ENCODE measurements at regions of chr10 and their contacts with region 1.

Region 1: GRCh38 chr10:112741830-112742411 is 208.1 kb upstream of the TCF7L2 start:
- DNase-seq: peak; percentile 31
- H3K4me3 Mint-ChIP-seq: peak overlapping the region; percentile 12
- H3K27ac Mint-ChIP-seq: no peak overlapping the region
- H3K4me1 Mint-ChIP-seq: peaks cover 32% of the 10 kb centered on the region
- H3K27me3 Mint-ChIP-seq: no peaks in the 10 kb centered on the region
- CTCF ChIP-seq: no peak

Region 2: DNA sequence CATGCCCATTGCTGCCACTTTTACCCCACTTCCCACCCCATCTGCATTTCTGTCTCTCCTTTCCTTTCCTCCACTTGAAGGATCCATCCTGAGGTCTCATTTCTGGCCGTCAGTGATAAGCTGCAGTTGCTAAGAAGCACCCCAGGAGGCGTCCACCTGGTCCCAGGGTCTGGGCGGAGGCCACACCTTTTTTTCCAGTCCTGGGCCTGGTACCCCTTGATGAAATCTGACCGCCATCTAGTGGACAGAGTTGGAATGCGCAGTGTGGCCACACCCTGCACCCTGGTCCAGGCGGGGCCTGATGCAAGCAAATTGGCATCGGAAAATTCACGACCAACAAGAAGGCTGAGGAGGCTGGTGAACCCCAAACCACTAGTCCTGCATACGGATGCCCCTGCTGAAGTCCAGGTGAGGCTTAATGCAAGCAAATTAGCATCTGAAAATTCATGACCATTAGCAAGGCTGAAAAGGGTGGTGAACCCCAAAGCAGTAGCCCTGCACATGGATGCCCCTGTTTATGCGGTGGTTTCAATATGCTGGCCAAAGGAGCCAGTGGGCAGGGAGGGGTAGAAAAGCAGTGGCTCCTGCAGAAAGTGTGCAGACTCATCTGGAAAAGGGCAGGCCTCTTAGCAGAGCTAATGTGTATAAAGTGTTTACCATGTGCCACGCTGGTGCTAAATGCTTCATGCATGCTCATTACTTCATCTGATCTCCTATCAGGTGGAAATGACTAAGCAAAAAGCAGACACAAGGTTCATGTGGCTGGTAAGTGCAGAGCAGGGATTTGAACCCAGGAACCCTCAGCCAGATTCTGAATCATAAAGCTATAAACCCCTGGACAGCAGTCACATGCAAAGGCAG is 601.6 kb before region 1 on chr10:
- CTCF ChIA-PET with region 1: no interaction called
- intact Hi-C with region 1: no loop called
- DNase-seq: peak; percentile 85
- H3K4me3 Mint-ChIP-seq: no peak overlapping the region
- H3K27ac Mint-ChIP-seq: no peak overlapping the region
- H3K4me1 Mint-ChIP-seq: no peaks in the 10 kb centered on the region
- H3K27me3 Mint-ChIP-seq: peaks cover 21% of the 10 kb centered on the region
- CTCF ChIP-seq: peak; percentile 83

Region 3: DNA sequence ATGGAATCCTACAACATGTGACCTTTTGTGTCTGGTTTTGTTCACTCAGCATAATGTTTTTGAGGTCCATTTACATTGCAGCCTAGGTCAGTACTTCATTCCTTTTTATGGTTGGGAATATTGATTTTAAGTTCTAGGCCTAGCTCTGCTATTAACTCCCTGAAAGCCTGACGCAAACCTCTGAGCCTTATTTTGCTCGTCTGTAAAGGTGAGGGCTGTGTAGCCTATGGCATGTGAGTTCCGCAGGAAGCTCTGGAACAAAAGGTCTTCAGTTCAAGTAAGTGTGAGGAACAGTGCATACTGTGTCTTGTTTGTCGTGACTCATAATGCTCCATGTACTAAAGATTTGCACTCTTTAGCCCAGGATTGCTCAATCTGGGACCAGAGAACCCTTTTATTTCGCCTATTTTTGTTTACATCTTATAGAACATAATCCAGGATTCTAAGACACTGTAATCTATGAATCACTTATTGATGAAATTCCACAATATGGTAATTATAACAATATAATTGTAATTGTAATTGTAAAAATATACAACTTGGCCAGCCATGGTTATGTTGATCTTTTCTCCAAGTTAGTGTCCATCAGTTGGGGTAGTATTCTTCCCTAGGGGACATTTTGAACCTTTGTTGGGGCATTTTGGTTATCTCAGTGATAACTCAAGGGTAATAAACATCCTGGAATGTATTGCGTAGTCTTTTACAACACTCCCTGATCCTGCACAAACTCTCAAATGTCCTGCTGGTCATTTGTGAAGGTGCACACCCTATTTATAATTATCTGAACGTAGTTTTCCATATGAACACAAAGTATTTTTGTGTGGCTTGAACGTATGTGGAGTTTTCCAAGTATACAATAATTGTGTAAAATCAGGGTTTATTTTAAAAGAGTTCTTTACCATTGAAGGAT is 110.2 kb before region 1 on chr10:
- CTCF ChIA-PET with region 1: no interaction called
- intact Hi-C with region 1: loop called (anchors 2 kb)
- DNase-seq: peak; percentile 54
- H3K4me3 Mint-ChIP-seq: no peak overlapping the region
- H3K27ac Mint-ChIP-seq: peak overlapping the region; percentile 94
- H3K4me1 Mint-ChIP-seq: peaks cover 50% of the 10 kb centered on the region
- H3K27me3 Mint-ChIP-seq: no peaks in the 10 kb centered on the region
- CTCF ChIP-seq: no peak

Region 4: GRCh38 chr10:112775381-112775780 is 33.5 kb after region 1 on chr10:
- CTCF ChIA-PET with region 1: no interaction called
- intact Hi-C with region 1: loop called (anchors 2 kb)
- DNase-seq: no peak
- H3K4me3 Mint-ChIP-seq: no peak overlapping the region
- H3K27ac Mint-ChIP-seq: no peak overlapping the region
- H3K4me1 Mint-ChIP-seq: peaks cover 35% of the 10 kb centered on the region
- H3K27me3 Mint-ChIP-seq: no peaks in the 10 kb centered on the region
- CTCF ChIP-seq: no peak

Region 5: DNA sequence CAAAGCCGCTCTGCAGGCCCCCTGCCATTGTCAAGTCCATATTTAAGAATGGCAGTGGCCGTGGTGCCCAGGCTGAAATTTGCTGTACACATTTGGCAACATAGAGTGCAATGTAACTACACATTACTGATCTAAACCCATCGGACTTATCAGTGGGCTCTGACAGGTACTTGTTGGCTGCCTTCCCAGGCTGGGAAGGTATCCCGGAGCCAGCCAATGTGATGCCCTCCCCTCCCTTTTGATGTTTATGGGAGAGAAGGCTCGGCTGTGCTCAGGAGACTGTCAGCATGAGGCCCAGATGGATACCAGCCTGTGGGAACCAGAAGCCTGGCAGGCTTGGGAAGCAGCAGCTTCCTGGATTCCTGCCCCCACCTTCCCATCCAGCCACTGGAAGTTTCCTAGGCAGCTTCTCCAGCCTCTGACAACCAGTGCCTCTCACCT is 62.1 kb after region 1 on chr10:
- CTCF ChIA-PET with region 1: no interaction called
- intact Hi-C with region 1: loop called (anchors 2 kb)
- DNase-seq: peak; percentile 30
- H3K4me3 Mint-ChIP-seq: peak overlapping the region; percentile 37
- H3K27ac Mint-ChIP-seq: peak overlapping the region; percentile 85
- H3K4me1 Mint-ChIP-seq: peaks cover 51% of the 10 kb centered on the region
- H3K27me3 Mint-ChIP-seq: no peaks in the 10 kb centered on the region
- CTCF ChIP-seq: no peak

Region 6: GRCh38 chr10:112886463-112886862 is 144.5 kb after region 1 on chr10:
- CTCF ChIA-PET with region 1: no interaction called
- intact Hi-C with region 1: no loop called
- DNase-seq: no peak
- H3K4me3 Mint-ChIP-seq: no peak overlapping the region
- H3K27ac Mint-ChIP-seq: no peak overlapping the region
- H3K4me1 Mint-ChIP-seq: no peaks in the 10 kb centered on the region
- H3K27me3 Mint-ChIP-seq: no peaks in the 10 kb centered on the region
- CTCF ChIP-seq: no peak

Region 7: GRCh38 chr10:113060201-113061053 is 318.5 kb after region 1 on chr10:
- CTCF ChIA-PET with region 1: no interaction called
- intact Hi-C with region 1: loop called (anchors 10 kb)
- DNase-seq: no peak
- H3K4me3 Mint-ChIP-seq: no peak overlapping the region
- H3K27ac Mint-ChIP-seq: no peak overlapping the region
- H3K4me1 Mint-ChIP-seq: peaks cover 28% of the 10 kb centered on the region
- H3K27me3 Mint-ChIP-seq: no peaks in the 10 kb centered on the region
- CTCF ChIP-seq: no peak

Measured in Calu3 (cell line).